ENCODE measurements at regions of chr13 and their contacts with region 1.

Region 1: GRCh38 chr13:98033277-98034247 is 80.1 kb downstream of the IPO5 start:
- DNase-seq: peak in 1 of 5 donors; percentile 25
- ATAC-seq: peak in 1 of 4 donors; percentile 36
- H3K4me3 ChIP-seq: no peak overlapping the region
- H3K27ac ChIP-seq: no peak overlapping the region
- H3K4me1 ChIP-seq: no peaks in the 10 kb centered on the region
- H3K27me3 ChIP-seq: no peaks in the 10 kb centered on the region
- CTCF ChIP-seq: peak in 10 of 12 donors; percentile 21 to 60 (median 48)
- POLR2A ChIP-seq: no peak

Region 2: DNA sequence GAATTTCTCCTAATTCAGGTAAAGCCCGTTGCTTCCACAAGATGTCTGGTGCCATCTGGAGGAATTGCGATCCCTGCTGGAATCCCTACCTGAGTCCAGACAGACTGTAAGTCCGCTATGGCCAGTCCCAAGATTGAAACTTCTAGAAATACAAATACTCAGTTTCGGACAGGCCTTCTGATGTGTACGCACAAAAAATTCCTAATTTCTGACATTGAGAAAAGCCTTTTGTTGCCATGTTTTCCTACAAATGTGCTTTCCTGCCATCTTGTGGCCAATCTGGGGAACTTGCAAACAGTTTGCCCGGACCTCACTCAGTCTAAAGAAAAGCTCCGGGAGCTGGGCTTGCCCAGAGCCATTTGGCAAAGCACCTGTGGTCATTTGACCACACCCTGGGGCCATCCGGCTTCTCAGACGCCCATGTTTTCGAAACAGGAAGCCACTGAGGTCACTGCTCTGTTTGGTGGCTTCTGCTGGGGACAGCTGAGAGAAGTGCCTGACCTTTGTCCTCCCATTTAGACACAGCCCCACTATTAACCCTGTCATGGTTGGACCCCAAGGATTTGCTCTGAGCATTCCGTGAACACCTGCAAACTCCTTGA is 639.5 kb after region 1 on chr13:
- intact Hi-C with region 1: loop called in 4 of 10 experiments (anchors 5 to 10 kb)
- DNase-seq: peak; percentile 66 to 74 (median 70)
- ATAC-seq: peak; percentile 66 to 96 (median 92)
- H3K4me3 ChIP-seq: peak overlapping the region in 1 of 12 donors; percentile 14
- H3K27ac ChIP-seq: peak overlapping the region in 1 of 12 donors; percentile 1
- H3K4me1 ChIP-seq: peaks cover 0 to 15% (median 7%) of the 10 kb centered on the region in 12 donors
- H3K27me3 ChIP-seq: no peaks in the 10 kb centered on the region
- CTCF ChIP-seq: peak; percentile 82 to 96 (median 88)
- POLR2A ChIP-seq: no peak